ENCODE measurements at regions of chr2 and their contacts with region 1.

Region 1: DNA sequence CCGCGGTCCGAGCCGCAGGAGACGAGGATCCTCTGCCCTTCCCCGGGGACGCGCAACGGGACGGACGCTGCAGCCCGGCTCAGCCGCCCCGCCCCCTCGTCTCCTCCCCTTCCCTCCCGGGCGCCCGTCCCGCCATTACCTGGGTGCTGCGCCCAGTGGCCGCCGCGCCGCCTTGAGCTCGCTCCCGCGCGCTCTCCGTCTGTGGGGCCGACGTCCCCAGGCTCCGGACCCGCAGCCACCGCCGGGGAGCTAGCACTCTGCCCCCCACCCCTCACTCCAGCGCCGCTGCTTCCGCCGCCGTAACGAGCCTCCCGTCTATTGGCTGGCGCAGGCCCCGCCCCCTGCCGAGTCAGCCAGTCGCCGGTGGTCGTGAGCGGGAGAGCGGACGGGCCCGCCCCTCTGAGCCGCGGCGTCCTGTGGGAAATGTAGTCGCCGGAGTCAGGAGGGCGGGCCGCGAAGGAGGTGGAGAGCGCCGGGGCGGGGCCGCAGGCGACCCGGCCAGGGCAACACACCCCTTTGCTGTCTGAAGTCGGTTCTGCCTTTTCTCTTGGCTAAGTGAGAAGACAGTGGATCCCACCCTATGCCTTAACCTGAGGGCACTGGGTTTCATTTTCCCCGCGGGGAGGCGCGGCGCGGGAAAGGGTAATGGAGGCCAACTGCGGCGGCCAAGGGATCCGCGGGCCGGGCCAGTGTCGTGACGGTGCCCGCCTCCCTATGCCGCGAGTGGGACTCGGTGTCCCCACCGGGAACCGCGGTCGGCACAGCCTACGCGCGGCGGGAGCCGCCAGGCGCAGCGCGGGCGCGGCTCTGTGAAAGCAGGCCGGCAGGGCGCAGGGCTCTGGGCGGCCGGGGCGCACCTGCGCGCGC is at the start of gene SAP130:
- DNase-seq: peak; percentile 95 to 99 (median 98)
- ATAC-seq: peak; percentile 75
- H3K4me3 ChIP-seq: peak within 1 kb of the TSS; percentile 82 to 89
- H3K4me3 Mint-ChIP-seq: peak within 1 kb of the TSS; percentile 97
- H3K27ac ChIP-seq: peak within 1 kb of the TSS; percentile 79 to 85
- H3K27ac Mint-ChIP-seq: peak within 1 kb of the TSS; percentile 92
- H3K4me1 ChIP-seq: peaks cover 12% of the 10 kb centered on the region
- H3K4me1 Mint-ChIP-seq: peaks cover 23% of the 10 kb centered on the region
- H3K27me3 ChIP-seq: no peaks in the 10 kb centered on the region
- H3K27me3 Mint-ChIP-seq: no peaks in the 10 kb centered on the region
- CTCF ChIP-seq: no peak
- total RNA-seq, gene SAP130: 17.8 to 18.9 TPM

Region 2: GRCh38 chr2:127293748-127294562 is 734.1 kb before region 1 on chr2 and contains the start of gene ERCC3:
- CTCF ChIA-PET with region 1: no interaction called
- POLR2A ChIA-PET with region 1: no interaction called
- intact Hi-C with region 1: loop called in 1 of 2 experiments (anchors 10 kb)
- DNase-seq: peak; percentile 56 to 90 (median 83)
- ATAC-seq: peak; percentile 91
- H3K4me3 ChIP-seq: peak within 1 kb of the TSS; percentile 75 to 91
- H3K4me3 Mint-ChIP-seq: peak within 1 kb of the TSS; percentile 94
- H3K27ac ChIP-seq: peak within 1 kb of the TSS; percentile 74 to 76
- H3K27ac Mint-ChIP-seq: peak within 1 kb of the TSS; percentile 91
- H3K4me1 ChIP-seq: peaks cover 13% of the 10 kb centered on the region
- H3K4me1 Mint-ChIP-seq: peaks cover 45% of the 10 kb centered on the region
- H3K27me3 ChIP-seq: no peaks in the 10 kb centered on the region
- H3K27me3 Mint-ChIP-seq: no peaks in the 10 kb centered on the region
- CTCF ChIP-seq: no peak
- total RNA-seq, gene ERCC3: 43.2 to 46.4 TPM

Region 3: GRCh38 chr2:127408004-127408806 is 619.8 kb before region 1 on chr2:
- CTCF ChIA-PET with region 1: no interaction called
- POLR2A ChIA-PET with region 1: no interaction called
- intact Hi-C with region 1: loop called in 1 of 2 experiments (anchors 5 kb)
- DNase-seq: peak; percentile 73 to 95 (median 90)
- ATAC-seq: peak; percentile 88
- H3K4me3 ChIP-seq: peak overlapping the region; percentile 16 to 44
- H3K4me3 Mint-ChIP-seq: peak overlapping the region; percentile 65
- H3K27ac ChIP-seq: peak overlapping the region in 1 of 2 experiments; percentile 37
- H3K27ac Mint-ChIP-seq: no peak overlapping the region
- H3K4me1 ChIP-seq: peaks cover 5% of the 10 kb centered on the region
- H3K4me1 Mint-ChIP-seq: peaks cover 12% of the 10 kb centered on the region
- H3K27me3 ChIP-seq: no peaks in the 10 kb centered on the region
- H3K27me3 Mint-ChIP-seq: no peaks in the 10 kb centered on the region
- CTCF ChIP-seq: no peak

Region 4: GRCh38 chr2:127810619-127811396 is 217.2 kb before region 1 on chr2 and contains the start of gene WDR33:
- CTCF ChIA-PET with region 1: no interaction called
- POLR2A ChIA-PET with region 1: no interaction called
- intact Hi-C with region 1: loop called in 1 of 2 experiments (anchors 1 kb)
- DNase-seq: peak; percentile 87 to 98 (median 95)
- ATAC-seq: peak; percentile 95
- H3K4me3 ChIP-seq: peak within 1 kb of the TSS; percentile 88 to 92
- H3K4me3 Mint-ChIP-seq: peak within 1 kb of the TSS; percentile 92
- H3K27ac ChIP-seq: peak within 1 kb of the TSS; percentile 95 to 98
- H3K27ac Mint-ChIP-seq: peak within 1 kb of the TSS; percentile 98
- H3K4me1 ChIP-seq: peaks cover 42% of the 10 kb centered on the region
- H3K4me1 Mint-ChIP-seq: peaks cover 51% of the 10 kb centered on the region
- H3K27me3 ChIP-seq: no peaks in the 10 kb centered on the region
- H3K27me3 Mint-ChIP-seq: no peaks in the 10 kb centered on the region
- CTCF ChIP-seq: no peak
- total RNA-seq, gene WDR33: 60.3 to 61.0 TPM

Region 5: GRCh38 chr2:127884436-127885345 is 143.3 kb before region 1 on chr2:
- CTCF ChIA-PET with region 1: interaction called, 4 read pairs
- POLR2A ChIA-PET with region 1: no interaction called
- intact Hi-C with region 1: loop called (anchors 2 kb)
- DNase-seq: peak in 1 of 9 experiments; percentile 9
- ATAC-seq: no peak
- H3K4me3 ChIP-seq: peak overlapping the region; percentile 38
- H3K4me3 Mint-ChIP-seq: peak overlapping the region; percentile 86
- H3K27ac ChIP-seq: no peak overlapping the region
- H3K27ac Mint-ChIP-seq: peak overlapping the region; percentile 87
- H3K4me1 ChIP-seq: peaks cover 22% of the 10 kb centered on the region
- H3K4me1 Mint-ChIP-seq: peaks cover 66% of the 10 kb centered on the region
- H3K27me3 ChIP-seq: no peaks in the 10 kb centered on the region
- H3K27me3 Mint-ChIP-seq: no peaks in the 10 kb centered on the region
- CTCF ChIP-seq: no peak

Region 6: GRCh38 chr2:128232965-128233789 is 205.1 kb after region 1 on chr2:
- CTCF ChIA-PET with region 1: no interaction called
- POLR2A ChIA-PET with region 1: no interaction called
- intact Hi-C with region 1: loop called in 1 of 2 experiments (anchors 1 kb)
- DNase-seq: peak; percentile 69 to 91 (median 83)
- ATAC-seq: peak; percentile 97
- H3K4me3 ChIP-seq: peak overlapping the region; percentile 61 to 77
- H3K4me3 Mint-ChIP-seq: peak overlapping the region; percentile 91
- H3K27ac ChIP-seq: peak overlapping the region in 1 of 2 experiments; percentile 42
- H3K27ac Mint-ChIP-seq: peak overlapping the region; percentile 69
- H3K4me1 ChIP-seq: peaks cover 10% of the 10 kb centered on the region
- H3K4me1 Mint-ChIP-seq: peaks cover 3% of the 10 kb centered on the region
- H3K27me3 ChIP-seq: peaks cover 0 to 8% of the 10 kb centered on the region in 2 experiments
- H3K27me3 Mint-ChIP-seq: peaks cover 6% of the 10 kb centered on the region
- CTCF ChIP-seq: peak; percentile 88